IMR-90 (cell line): ENCODE measurements at regions of chr12 and their contacts with region 1.

Region 1: GRCh38 chr12:6752921-6753771 is at the start of gene MLF2:
- DNase-seq: peak; percentile 99
- ATAC-seq: peak; percentile 93
- H3K4me3 ChIP-seq: peak within 1 kb of the TSS; percentile 71
- H3K27ac ChIP-seq: peak within 1 kb of the TSS; percentile 94
- H3K4me1 ChIP-seq: peaks cover 7% of the 10 kb centered on the region
- H3K27me3 ChIP-seq: no peaks in the 10 kb centered on the region
- CTCF ChIP-seq: no peak; the same call in 1 of the 2 replicates
- POLR2A ChIP-seq: no peak; the same call in none of the 2 replicates
- RAD21 ChIP-seq: no peak
- total RNA-seq, gene MLF2: 236 and 244 TPM in 2 replicates

Region 2: GRCh38 chr12:6451348-6452244 is 301.6 kb before region 1 on chr12 and contains the start of gene TAPBPL:
- CTCF ChIA-PET with region 1: no interaction called
- POLR2A ChIA-PET with region 1: no interaction called
- dilution Hi-C with region 1: no loop called
- in situ Hi-C with region 1: no loop called
- intact Hi-C with region 1: no loop called
- DNase-seq: peak; percentile 75
- ATAC-seq: peak; percentile 88
- H3K4me3 ChIP-seq: peak within 1 kb of the TSS; percentile 57
- H3K27ac ChIP-seq: peak within 1 kb of the TSS; percentile 98
- H3K4me1 ChIP-seq: peaks cover 16% of the 10 kb centered on the region
- H3K27me3 ChIP-seq: no peaks in the 10 kb centered on the region
- CTCF ChIP-seq: no peak
- POLR2A ChIP-seq: peak; percentile 38; the same call in 1 of the 2 replicates
- RAD21 ChIP-seq: no peak
- total RNA-seq, gene TAPBPL: 3.4 and 3.6 TPM in 2 replicates

Region 3: DNA sequence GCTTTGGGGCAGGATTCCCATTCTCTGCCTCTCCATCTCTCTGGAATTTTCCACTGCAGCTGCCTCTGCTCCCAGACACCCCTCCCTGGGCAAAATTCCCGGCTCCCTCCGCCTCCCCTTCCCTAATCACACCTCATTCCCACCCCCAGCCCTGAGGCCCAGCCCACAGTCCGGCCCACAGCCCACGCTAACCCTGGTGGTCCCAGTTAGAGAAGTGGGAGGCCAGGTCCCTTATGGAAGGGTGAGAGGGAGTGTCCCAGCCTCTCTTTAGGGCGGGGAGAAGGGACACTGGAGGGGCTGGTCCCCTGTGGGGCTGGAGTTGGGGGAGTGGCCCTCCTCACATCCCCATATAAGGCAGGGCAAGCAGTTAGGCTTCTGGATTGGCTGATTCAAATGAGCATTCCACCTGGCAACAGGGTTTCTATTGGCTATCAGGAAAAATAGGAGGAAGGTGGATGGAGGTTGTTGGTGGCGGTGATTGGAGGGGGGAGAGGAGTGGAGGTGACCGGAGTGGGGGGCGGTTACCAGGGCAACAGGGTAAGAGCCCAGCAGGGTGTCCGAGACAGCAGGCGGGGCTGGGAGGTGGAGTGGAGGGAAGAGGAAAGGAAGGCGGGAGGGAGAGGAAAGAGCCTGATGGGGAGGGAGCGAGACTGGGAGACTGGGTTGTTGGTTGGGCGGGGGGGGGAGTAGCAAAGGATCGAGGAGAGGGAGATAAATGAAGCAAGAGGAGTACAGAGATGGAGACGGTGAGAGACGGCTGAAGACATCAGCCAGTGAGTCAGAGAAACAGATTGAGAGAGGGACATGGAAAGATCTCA is 11.1 kb after region 1 on chr12:
- CTCF ChIA-PET with region 1: interaction called, 27 read pairs
- POLR2A ChIA-PET with region 1: interaction called, 21 read pairs
- dilution Hi-C with region 1: no loop called
- in situ Hi-C with region 1: no loop called
- intact Hi-C with region 1: loop called (anchors 1 kb)
- DNase-seq: peak; percentile 99
- ATAC-seq: peak; percentile 82
- H3K4me3 ChIP-seq: peak overlapping the region; percentile 12; the same call in 1 of the 2 replicates
- H3K27ac ChIP-seq: peak overlapping the region; percentile 90
- H3K4me1 ChIP-seq: peaks cover 21% of the 10 kb centered on the region
- H3K27me3 ChIP-seq: no peaks in the 10 kb centered on the region
- CTCF ChIP-seq: no peak
- POLR2A ChIP-seq: no peak
- RAD21 ChIP-seq: no peak

Region 4: GRCh38 chr12:6788972-6789924 is 36.1 kb after region 1 on chr12 and contains the start of gene CD4:
- CTCF ChIA-PET with region 1: interaction called, 12 read pairs
- POLR2A ChIA-PET with region 1: no interaction called
- dilution Hi-C with region 1: no loop called
- in situ Hi-C with region 1: no loop called
- intact Hi-C with region 1: no loop called
- DNase-seq: no peak
- ATAC-seq: peak; percentile 77
- H3K4me3 ChIP-seq: peak within 1 kb of the TSS; percentile 42
- H3K27ac ChIP-seq: peak within 1 kb of the TSS; percentile 63
- H3K4me1 ChIP-seq: peaks cover 21% of the 10 kb centered on the region
- H3K27me3 ChIP-seq: no peaks in the 10 kb centered on the region
- CTCF ChIP-seq: no peak
- POLR2A ChIP-seq: no peak
- RAD21 ChIP-seq: no peak
- total RNA-seq, gene CD4: 4.2 and 5.7 TPM in 2 replicates

Region 5: GRCh38 chr12:7092229-7092985 is 339.3 kb after region 1 on chr12 and contains the start of gene C1R:
- CTCF ChIA-PET with region 1: no interaction called
- POLR2A ChIA-PET with region 1: no interaction called
- dilution Hi-C with region 1: no loop called
- in situ Hi-C with region 1: no loop called
- intact Hi-C with region 1: no loop called
- DNase-seq: peak; percentile 92
- ATAC-seq: peak; percentile 94
- H3K4me3 ChIP-seq: peak within 1 kb of the TSS; percentile 55
- H3K27ac ChIP-seq: peak within 1 kb of the TSS; percentile 84
- H3K4me1 ChIP-seq: peaks cover 26% of the 10 kb centered on the region
- H3K27me3 ChIP-seq: no peaks in the 10 kb centered on the region
- CTCF ChIP-seq: peak; percentile 94
- POLR2A ChIP-seq: no peak
- RAD21 ChIP-seq: peak; percentile 85
- total RNA-seq, gene C1R: 19.4 and 38.4 TPM in 2 replicates